CD4-positive, alpha-beta memory T cell (primary cell): ENCODE measurements at regions of chr19 and their contacts with region 1.

Region 1: DNA sequence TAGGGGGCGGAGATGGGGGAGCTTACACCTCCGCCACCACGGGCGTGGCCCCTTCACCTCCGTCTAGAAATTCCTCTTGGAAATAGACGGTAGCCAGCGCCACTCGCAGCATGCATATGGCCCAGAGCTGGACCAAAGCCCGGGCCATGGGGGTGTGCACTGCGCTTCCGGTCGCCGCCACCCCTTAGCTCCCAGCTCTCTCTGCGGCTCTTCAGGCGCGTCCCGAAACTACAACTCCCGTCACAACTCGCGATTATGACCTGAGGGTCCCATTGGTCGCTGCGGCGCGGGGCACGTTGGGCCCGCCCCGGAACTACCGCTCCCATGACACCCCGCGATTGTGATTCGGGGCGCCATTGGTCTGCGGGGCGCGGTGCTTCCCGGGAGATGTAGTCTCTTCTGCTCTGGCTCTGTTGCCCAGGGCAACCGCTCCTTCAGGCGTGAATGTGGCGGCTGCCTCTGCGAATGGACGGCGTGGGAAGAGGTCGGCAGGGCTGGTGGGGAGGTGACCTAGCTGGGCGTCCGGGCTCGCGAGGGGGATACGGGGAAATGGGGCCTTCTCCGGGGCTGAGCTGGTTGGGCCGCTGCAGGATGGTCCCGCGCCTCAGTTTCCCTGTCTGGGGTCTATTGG is at the starts of genes C19orf44 and CALR3:
- DNase-seq: peak; percentile 96 to 97 (median 96)
- H3K4me3 ChIP-seq: peak within 1 kb of the TSS; percentile 65 to 75
- H3K4me3 Mint-ChIP-seq: peak within 1 kb of the TSS; percentile 89 to 95 (median 92)
- H3K27ac ChIP-seq: peak within 1 kb of the TSS; percentile 50
- H3K27ac Mint-ChIP-seq: peak within 1 kb of the TSS; percentile 79 to 97 (median 93)
- H3K4me1 ChIP-seq: peaks cover 10% of the 10 kb centered on the region
- H3K4me1 Mint-ChIP-seq: peaks cover 5 to 14% (median 9%) of the 10 kb centered on the region in 4 donors
- H3K27me3 ChIP-seq: no peaks in the 10 kb centered on the region
- H3K27me3 Mint-ChIP-seq: no peaks in the 10 kb centered on the region
- total RNA-seq, gene C19orf44: 4.6 to 6.7 TPM
- total RNA-seq, gene CALR3: not detected

Region 2: GRCh38 chr19:16283210-16284061 is 212.7 kb before region 1 on chr19:
- CTCF ChIA-PET with region 1: no interaction called
- POLR2A ChIA-PET with region 1: no interaction called
- intact Hi-C with region 1: no loop called
- DNase-seq: peak; percentile 42 to 60 (median 51)
- H3K4me3 ChIP-seq: peak overlapping the region; percentile 13 to 46
- H3K4me3 Mint-ChIP-seq: peak overlapping the region; percentile 51 to 84 (median 74)
- H3K27ac ChIP-seq: peak overlapping the region; percentile 31
- H3K27ac Mint-ChIP-seq: peak overlapping the region; percentile 57 to 94 (median 89)
- H3K4me1 ChIP-seq: peaks cover 23% of the 10 kb centered on the region
- H3K4me1 Mint-ChIP-seq: peaks cover 14 to 43% (median 23%) of the 10 kb centered on the region in 4 donors
- H3K27me3 ChIP-seq: no peaks in the 10 kb centered on the region
- H3K27me3 Mint-ChIP-seq: peaks cover 0 to 4% of the 10 kb centered on the region in 2 donors

Region 3: GRCh38 chr19:16397791-16398471 is 98.2 kb before region 1 on chr19:
- CTCF ChIA-PET with region 1: no interaction called
- POLR2A ChIA-PET with region 1: no interaction called
- intact Hi-C with region 1: no loop called
- DNase-seq: no peak
- H3K4me3 ChIP-seq: no peak overlapping the region
- H3K4me3 Mint-ChIP-seq: no peak overlapping the region
- H3K27ac ChIP-seq: no peak overlapping the region
- H3K27ac Mint-ChIP-seq: peak overlapping the region in 6 of 7 donors; percentile 16 to 93 (median 84)
- H3K4me1 ChIP-seq: peaks cover 18% of the 10 kb centered on the region
- H3K4me1 Mint-ChIP-seq: peaks cover 6 to 31% (median 12%) of the 10 kb centered on the region in 4 donors
- H3K27me3 ChIP-seq: no peaks in the 10 kb centered on the region
- H3K27me3 Mint-ChIP-seq: no peaks in the 10 kb centered on the region

Region 4: GRCh38 chr19:16470911-16471811 is 24.9 kb before region 1 on chr19:
- CTCF ChIA-PET with region 1: no interaction called
- POLR2A ChIA-PET with region 1: interaction called, 7 read pairs
- intact Hi-C with region 1: loop called (anchors 1 kb)
- DNase-seq: peak in 3 of 5 donors; percentile 13 to 15 (median 13)
- H3K4me3 ChIP-seq: peak overlapping the region; percentile 42 to 61
- H3K4me3 Mint-ChIP-seq: peak overlapping the region; percentile 87 to 92 (median 90)
- H3K27ac ChIP-seq: peak overlapping the region; percentile 79
- H3K27ac Mint-ChIP-seq: peak overlapping the region; percentile 26 to 91 (median 84)
- H3K4me1 ChIP-seq: peaks cover 33% of the 10 kb centered on the region
- H3K4me1 Mint-ChIP-seq: peaks cover 28 to 49% (median 36%) of the 10 kb centered on the region in 4 donors
- H3K27me3 ChIP-seq: no peaks in the 10 kb centered on the region
- H3K27me3 Mint-ChIP-seq: peaks cover 0 to 2% of the 10 kb centered on the region in 2 donors

Region 5: GRCh38 chr19:16566161-16566560 is 70.1 kb after region 1 on chr19:
- CTCF ChIA-PET with region 1: no interaction called
- POLR2A ChIA-PET with region 1: interaction called, 5 read pairs
- intact Hi-C with region 1: loop called (anchors 1 kb)
- DNase-seq: peak; percentile 89 to 96 (median 93)
- H3K4me3 ChIP-seq: peak overlapping the region; percentile 22 to 31
- H3K4me3 Mint-ChIP-seq: peak overlapping the region; percentile 83 to 98 (median 86)
- H3K27ac ChIP-seq: peak overlapping the region; percentile 71
- H3K27ac Mint-ChIP-seq: peak overlapping the region; percentile 87 to 100 (median 100)
- H3K4me1 ChIP-seq: peaks cover 47% of the 10 kb centered on the region
- H3K4me1 Mint-ChIP-seq: peaks cover 23 to 61% (median 44%) of the 10 kb centered on the region in 4 donors
- H3K27me3 ChIP-seq: no peaks in the 10 kb centered on the region
- H3K27me3 Mint-ChIP-seq: no peaks in the 10 kb centered on the region